Panc1 (cell line): ENCODE measurements at regions of chr7 and their contacts with region 1.

Region 1: DNA sequence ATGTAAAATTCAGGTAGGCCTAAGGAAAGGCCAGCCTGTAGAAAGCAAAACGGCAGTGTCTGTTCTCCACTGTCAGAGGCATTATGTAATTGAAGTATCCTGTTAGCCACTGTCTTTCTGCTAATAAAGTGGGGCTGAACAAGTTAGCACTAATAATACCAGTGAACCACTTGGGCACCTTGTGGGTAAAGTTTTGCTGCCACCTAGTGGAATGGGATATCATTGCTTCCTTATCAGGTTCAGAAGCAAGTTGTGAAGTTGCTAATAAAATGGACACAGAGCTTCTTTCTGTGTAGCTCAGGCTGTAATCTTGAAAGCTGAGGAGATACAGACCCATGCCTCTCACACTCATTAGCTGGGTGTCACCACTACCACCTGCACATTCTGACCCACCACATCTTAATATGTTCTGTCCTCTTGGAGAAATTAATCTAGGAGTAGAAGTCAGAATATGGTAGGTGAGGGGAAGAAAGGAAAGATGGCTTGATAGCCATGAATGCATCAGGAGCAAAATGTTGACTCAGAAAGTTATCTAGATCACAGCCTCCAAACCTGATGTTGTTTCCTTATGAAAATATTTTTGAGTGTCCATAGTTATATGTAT is 175.1 kb downstream of the SEPTIN7 start:
- DNase-seq: peak; percentile 71
- ATAC-seq: peak; percentile 60
- H3K4me3 ChIP-seq: no peak overlapping the region
- H3K27ac ChIP-seq: no peak overlapping the region
- H3K4me1 ChIP-seq: peaks cover 6% of the 10 kb centered on the region; the same call in 1 of the 2 replicates
- H3K27me3 ChIP-seq: peaks cover 2% of the 10 kb centered on the region; the same call in 1 of the 2 replicates
- CTCF ChIP-seq: peak; percentile 92

Region 2: GRCh38 chr7:35701287-35701900 is 274.6 kb before region 1 on chr7:
- CTCF ChIA-PET with region 1: no interaction called
- POLR2A ChIA-PET with region 1: no interaction called
- in situ Hi-C with region 1: no loop called
- intact Hi-C with region 1: loop called (anchors 10 kb)
- DNase-seq: no peak
- ATAC-seq: no peak
- H3K4me3 ChIP-seq: no peak overlapping the region
- H3K27ac ChIP-seq: no peak overlapping the region
- H3K4me1 ChIP-seq: 0 out of 2 replicates have a peak, but pooled peaks cover 6% of the 10 kb centered on the region
- H3K27me3 ChIP-seq: no peaks in the 10 kb centered on the region
- CTCF ChIP-seq: no peak